CD4-positive, alpha-beta T cell (primary cell): ENCODE measurements at regions of chr11 and their contacts with region 1.

Region 1: DNA sequence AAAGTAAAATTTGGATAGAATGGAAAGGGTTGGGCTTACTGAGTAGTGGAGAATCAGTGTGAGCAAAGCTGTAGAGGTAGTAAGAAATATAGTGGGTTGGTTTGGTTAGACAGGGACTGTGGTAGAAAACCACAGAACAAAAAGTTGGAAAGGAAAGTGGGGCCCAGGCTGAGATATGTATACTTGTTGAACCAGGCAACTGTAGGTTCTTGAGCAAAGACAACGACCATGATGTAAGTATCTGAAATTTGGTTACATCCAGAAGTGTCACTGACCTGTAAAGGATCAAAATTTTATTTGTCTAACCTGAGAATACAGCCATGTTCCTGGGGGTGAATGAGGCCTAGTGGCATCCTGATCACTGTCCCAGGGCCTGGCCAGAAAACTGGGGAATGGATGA is 114.1 kb downstream of the STIM1 start:
- DNase-seq: peak in 4 of 14 experiments; percentile 18 to 38 (median 23)
- ATAC-seq: peak; percentile 68
- H3K4me3 ChIP-seq: no peak overlapping the region
- H3K4me3 Mint-ChIP-seq: peak overlapping the region; percentile 10
- H3K27ac ChIP-seq: no peak overlapping the region
- H3K27ac Mint-ChIP-seq: peak overlapping the region; percentile 70
- H3K4me1 ChIP-seq: peaks cover 24% of the 10 kb centered on the region
- H3K4me1 Mint-ChIP-seq: peaks cover 81% of the 10 kb centered on the region
- H3K27me3 ChIP-seq: no peaks in the 10 kb centered on the region
- H3K27me3 Mint-ChIP-seq: no peaks in the 10 kb centered on the region
- CTCF ChIP-seq: no peak

Region 2: DNA sequence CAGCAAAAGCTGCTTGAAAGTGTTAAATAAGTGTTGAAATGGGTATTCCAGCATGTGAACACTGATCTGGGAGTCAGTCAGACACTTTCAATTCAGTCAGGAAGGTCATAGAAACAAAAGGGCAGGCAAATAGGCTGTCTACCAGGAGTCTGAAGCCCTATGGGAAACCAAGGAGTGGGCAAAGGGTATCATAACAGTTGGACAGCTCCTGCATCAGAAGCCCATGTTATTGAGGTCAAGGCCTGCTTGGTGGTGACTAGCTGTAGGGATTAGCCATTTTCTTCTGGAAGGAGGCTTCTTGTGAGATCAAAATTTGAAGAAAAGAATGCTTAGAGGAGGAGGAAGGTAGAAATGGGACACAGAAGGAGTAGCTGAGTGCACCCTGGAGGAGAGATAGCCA is 16.9 kb before region 1 on chr11:
- CTCF ChIA-PET with region 1: no interaction called
- POLR2A ChIA-PET with region 1: interaction called, 15 read pairs
- intact Hi-C with region 1: loop called in 1 of 2 experiments (anchors 2 kb)
- DNase-seq: peak in 1 of 14 experiments; percentile 20
- ATAC-seq: no peak
- H3K4me3 ChIP-seq: no peak overlapping the region
- H3K4me3 Mint-ChIP-seq: peak overlapping the region; percentile 70
- H3K27ac ChIP-seq: peak overlapping the region in 1 of 2 donors; percentile 30
- H3K27ac Mint-ChIP-seq: peak overlapping the region; percentile 96
- H3K4me1 ChIP-seq: peaks cover 70% of the 10 kb centered on the region
- H3K4me1 Mint-ChIP-seq: peaks cover 89% of the 10 kb centered on the region
- H3K27me3 ChIP-seq: no peaks in the 10 kb centered on the region
- H3K27me3 Mint-ChIP-seq: no peaks in the 10 kb centered on the region
- CTCF ChIP-seq: no peak

Region 3: GRCh38 chr11:4032122-4032521 is 62.5 kb after region 1 on chr11:
- CTCF ChIA-PET with region 1: no interaction called
- POLR2A ChIA-PET with region 1: no interaction called
- intact Hi-C with region 1: no loop called
- DNase-seq: no peak
- ATAC-seq: no peak
- H3K4me3 ChIP-seq: no peak overlapping the region
- H3K4me3 Mint-ChIP-seq: no peak overlapping the region
- H3K27ac ChIP-seq: no peak overlapping the region
- H3K27ac Mint-ChIP-seq: no peak overlapping the region
- H3K4me1 ChIP-seq: no peaks in the 10 kb centered on the region
- H3K4me1 Mint-ChIP-seq: peaks cover 40% of the 10 kb centered on the region
- H3K27me3 ChIP-seq: no peaks in the 10 kb centered on the region
- H3K27me3 Mint-ChIP-seq: no peaks in the 10 kb centered on the region
- CTCF ChIP-seq: no peak